ENCODE measurements at regions of chr15 and their contacts with region 1.

Region 1: GRCh38 chr15:63833021-63833696 is 589 bp downstream of the HERC1 start:
- DNase-seq: peak; percentile 52
- H3K4me3 Mint-ChIP-seq: peak overlapping the region; percentile 89
- H3K27ac Mint-ChIP-seq: peak overlapping the region; percentile 62
- H3K4me1 Mint-ChIP-seq: peaks cover 37% of the 10 kb centered on the region
- H3K27me3 Mint-ChIP-seq: peaks cover 4% of the 10 kb centered on the region

Region 2: GRCh38 chr15:63970621-63971426 is 137.7 kb after region 1 on chr15:
- CTCF ChIA-PET with region 1: no interaction called
- POLR2A ChIA-PET with region 1: interaction called, 11 read pairs
- DNase-seq: peak; percentile 47
- H3K4me3 Mint-ChIP-seq: peak overlapping the region; percentile 65
- H3K27ac Mint-ChIP-seq: peak overlapping the region; percentile 96
- H3K4me1 Mint-ChIP-seq: peaks cover 47% of the 10 kb centered on the region
- H3K27me3 Mint-ChIP-seq: no peaks in the 10 kb centered on the region